A673 (cell line): ENCODE measurements at regions of chr4 and their contacts with region 1.

Region 1: GRCh38 chr4:186067757-186068385 is 1.1 kb upstream of the TLR3 start:
- DNase-seq: peak; percentile 75
- H3K4me3 ChIP-seq: peak overlapping the region; percentile 44
- H3K27ac ChIP-seq: no peak overlapping the region
- H3K4me1 ChIP-seq: no peaks in the 10 kb centered on the region
- H3K27me3 ChIP-seq: no peaks in the 10 kb centered on the region
- CTCF ChIP-seq: peak; percentile 74

Region 2: GRCh38 chr4:185933078-185933581 is 134.7 kb before region 1 on chr4:
- CTCF ChIA-PET with region 1: no interaction called
- POLR2A ChIA-PET with region 1: no interaction called
- intact Hi-C with region 1: no loop called
- DNase-seq: peak; percentile 24
- H3K4me3 ChIP-seq: no peak overlapping the region
- H3K27ac ChIP-seq: no peak overlapping the region
- H3K4me1 ChIP-seq: no peaks in the 10 kb centered on the region
- H3K27me3 ChIP-seq: peaks cover 6% of the 10 kb centered on the region
- CTCF ChIP-seq: no peak

Region 3: GRCh38 chr4:186137196-186137794 is 69.4 kb after region 1 on chr4:
- CTCF ChIA-PET with region 1: interaction called, 13 read pairs
- POLR2A ChIA-PET with region 1: no interaction called
- intact Hi-C with region 1: loop called (anchors 1 kb)
- DNase-seq: peak; percentile 38
- H3K4me3 ChIP-seq: no peak overlapping the region
- H3K27ac ChIP-seq: no peak overlapping the region
- H3K4me1 ChIP-seq: no peaks in the 10 kb centered on the region
- H3K27me3 ChIP-seq: no peaks in the 10 kb centered on the region
- CTCF ChIP-seq: peak; percentile 72

Region 4: DNA sequence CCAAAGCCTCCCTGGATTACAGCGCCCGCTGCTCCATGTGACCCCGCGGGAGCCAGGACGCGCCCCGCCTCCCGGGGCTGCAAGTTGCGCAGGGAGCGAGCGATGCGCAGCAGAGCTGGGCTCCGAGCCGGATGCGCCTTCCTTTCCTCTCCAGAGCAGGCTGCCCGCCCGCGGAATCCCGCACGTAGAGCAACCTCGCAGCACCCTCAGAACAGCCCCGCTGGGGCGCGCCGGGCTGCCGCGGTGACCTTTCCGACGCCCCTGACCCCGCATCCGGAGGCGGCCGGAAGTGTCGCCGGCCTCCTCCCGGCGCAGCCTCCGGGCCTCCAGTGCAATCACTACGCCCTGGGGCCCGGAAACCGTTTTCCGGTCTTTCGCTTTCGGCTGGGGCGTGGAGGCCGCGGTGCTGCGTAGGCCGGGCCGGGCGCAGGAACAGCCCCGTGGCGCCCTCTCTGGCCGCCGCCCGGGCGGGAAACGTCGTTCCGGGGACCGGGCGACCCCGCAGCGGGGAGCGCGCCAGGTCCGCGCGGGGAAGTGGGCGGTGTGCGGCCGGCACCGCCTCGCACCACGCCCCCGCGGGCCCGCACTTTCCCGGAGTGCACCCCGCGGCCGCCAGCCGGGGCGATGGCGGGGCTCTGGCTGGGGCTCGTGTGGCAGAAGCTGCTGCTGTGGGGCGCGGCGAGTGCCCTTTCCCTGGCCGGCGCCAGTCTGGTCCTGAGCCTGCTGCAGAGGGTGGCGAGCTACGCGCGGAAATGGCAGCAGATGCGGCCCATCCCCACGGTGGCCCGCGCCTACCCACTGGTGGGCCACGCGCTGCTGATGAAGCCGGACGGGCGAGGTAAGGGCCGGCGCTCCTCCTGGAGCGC is 123.6 kb after region 1 on chr4 and contains the start of gene CYP4V2:
- CTCF ChIA-PET with region 1: no interaction called
- POLR2A ChIA-PET with region 1: no interaction called
- intact Hi-C with region 1: loop called (anchors 5 kb)
- DNase-seq: peak; percentile 85
- H3K4me3 ChIP-seq: peak within 1 kb of the TSS; percentile 71
- H3K27ac ChIP-seq: peak within 1 kb of the TSS; percentile 86
- H3K4me1 ChIP-seq: peaks cover 16% of the 10 kb centered on the region
- H3K27me3 ChIP-seq: no peaks in the 10 kb centered on the region
- CTCF ChIP-seq: peak; percentile 23; the same call in 1 of the 2 replicates
- total RNA-seq, gene CYP4V2: 14.3 and 15.3 TPM in 2 replicates